Mammary epithelial cell (primary cell): ENCODE measurements at regions of chr10 and their contacts with region 1.

Region 1: DNA sequence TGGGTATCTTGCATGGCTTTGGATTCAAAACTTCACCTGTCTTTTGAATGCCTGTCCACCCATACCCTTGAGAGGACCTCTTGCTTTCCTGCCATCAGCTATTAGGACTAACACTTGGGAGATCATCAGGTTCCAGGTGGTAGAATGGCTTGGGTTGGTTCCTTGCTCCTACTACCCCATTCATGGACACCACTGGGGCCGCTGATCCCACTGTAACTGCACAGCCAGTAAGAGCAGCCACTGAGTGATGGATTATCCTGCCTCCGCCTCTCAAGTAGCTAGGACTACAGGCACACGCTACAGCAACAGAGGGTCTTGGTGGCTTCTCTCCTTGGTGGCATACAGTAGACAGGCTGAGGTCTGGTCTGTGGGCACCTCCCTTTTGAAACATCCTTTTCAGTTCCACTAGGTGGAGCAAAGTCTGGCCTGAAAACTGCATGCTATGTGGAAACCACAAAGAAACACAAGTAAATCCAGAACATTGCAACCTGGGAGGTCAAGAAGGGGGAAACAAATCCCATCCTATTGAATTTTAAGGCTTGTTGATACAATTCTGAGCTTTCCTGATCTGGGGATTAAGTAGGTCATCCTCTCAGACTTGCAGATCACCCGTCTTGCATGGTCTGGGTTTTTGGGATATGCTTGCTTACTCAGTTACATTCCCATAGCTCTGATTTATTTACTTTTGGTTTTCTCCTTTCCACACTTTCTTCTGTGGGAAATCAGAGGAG is 9.4 kb downstream of the WBP1L start:
- DNase-seq: peak; percentile 37
- H3K4me3 ChIP-seq: no peak overlapping the region
- H3K27ac ChIP-seq: no peak overlapping the region
- H3K4me1 ChIP-seq: no peaks in the 10 kb centered on the region
- H3K27me3 ChIP-seq: no peaks in the 10 kb centered on the region
- CTCF ChIP-seq: peak; percentile 52 to 77

Region 2: GRCh38 chr10:102615361-102615760 is 137.7 kb before region 1 on chr10:
- CTCF ChIA-PET with region 1: no interaction called
- dilution Hi-C with region 1: no loop called
- in situ Hi-C with region 1: no loop called
- intact Hi-C with region 1: no loop called
- DNase-seq: no peak
- H3K4me3 ChIP-seq: no peak overlapping the region
- H3K27ac ChIP-seq: no peak overlapping the region
- H3K4me1 ChIP-seq: peaks cover 10% of the 10 kb centered on the region
- H3K27me3 ChIP-seq: no peaks in the 10 kb centered on the region
- CTCF ChIP-seq: peak; percentile 28 to 30

Region 3: DNA sequence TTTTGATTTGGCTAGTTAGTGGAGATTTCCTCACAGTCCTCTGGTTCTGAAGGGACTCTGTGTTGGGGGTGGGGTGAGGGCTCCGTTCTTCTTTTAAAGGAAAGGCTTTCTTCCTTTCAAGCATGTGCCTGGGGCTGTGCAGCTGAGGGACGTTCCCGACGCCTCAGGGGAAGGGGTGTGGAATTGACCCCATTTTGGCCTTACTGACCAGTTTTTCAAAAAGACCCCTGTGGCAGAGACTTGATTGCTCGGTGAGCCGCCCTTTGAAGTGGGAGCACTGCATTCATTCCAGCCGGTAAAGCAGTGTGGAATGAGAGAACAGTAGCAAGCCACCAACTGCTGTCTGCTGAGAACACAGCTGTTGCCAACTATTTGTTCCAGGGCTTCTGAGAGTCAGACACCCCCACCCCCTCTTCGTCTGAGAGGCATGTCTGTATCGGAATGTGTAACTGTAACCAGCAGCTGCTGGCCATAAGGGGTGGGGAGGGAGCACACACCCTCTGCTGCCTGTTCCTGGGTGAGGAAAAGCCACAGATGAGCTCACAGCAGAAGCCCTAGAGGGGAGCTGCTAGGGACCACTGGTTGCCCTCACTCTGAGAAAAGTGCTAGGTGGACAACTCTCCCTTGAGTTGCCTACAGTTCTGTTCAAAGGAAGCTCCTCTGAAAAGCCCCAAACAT is 23.8 kb after region 1 on chr10:
- CTCF ChIA-PET with region 1: interaction called, 4 read pairs
- dilution Hi-C with region 1: no loop called
- in situ Hi-C with region 1: no loop called
- intact Hi-C with region 1: loop called (anchors 1 kb)
- DNase-seq: peak; percentile 91
- H3K4me3 ChIP-seq: peak overlapping the region in 1 of 3 experiments; percentile 6
- H3K27ac ChIP-seq: no peak overlapping the region
- H3K4me1 ChIP-seq: peaks cover 47% of the 10 kb centered on the region
- H3K27me3 ChIP-seq: no peaks in the 10 kb centered on the region
- CTCF ChIP-seq: no peak

Region 4: GRCh38 chr10:102822222-102822621 is 69.1 kb after region 1 on chr10:
- CTCF ChIA-PET with region 1: no interaction called
- dilution Hi-C with region 1: no loop called
- in situ Hi-C with region 1: loop called in 1 of 2 experiments (anchors 10 kb)
- intact Hi-C with region 1: no loop called
- DNase-seq: no peak
- H3K4me3 ChIP-seq: no peak overlapping the region
- H3K27ac ChIP-seq: no peak overlapping the region
- H3K4me1 ChIP-seq: peaks cover 6% of the 10 kb centered on the region
- H3K27me3 ChIP-seq: no peaks in the 10 kb centered on the region
- CTCF ChIP-seq: no peak